CD4-positive, alpha-beta memory T cell (primary cell): ENCODE measurements at regions of chr3 and their contacts with region 1.

Region 1: GRCh38 chr3:161220850-161221753 is at the start of gene NMD3:
- DNase-seq: peak; percentile 88 to 92 (median 90)
- H3K4me3 ChIP-seq: peak within 1 kb of the TSS; percentile 83 to 84
- H3K4me3 Mint-ChIP-seq: peak within 1 kb of the TSS; percentile 92 to 96 (median 94)
- H3K27ac ChIP-seq: peak within 1 kb of the TSS; percentile 93
- H3K27ac Mint-ChIP-seq: peak within 1 kb of the TSS; percentile 89 to 98 (median 96)
- H3K4me1 ChIP-seq: peaks cover 49% of the 10 kb centered on the region
- H3K4me1 Mint-ChIP-seq: peaks cover 21 to 45% (median 30%) of the 10 kb centered on the region in 4 donors
- H3K27me3 ChIP-seq: no peaks in the 10 kb centered on the region
- H3K27me3 Mint-ChIP-seq: peaks cover 2 to 3% of the 10 kb centered on the region in 2 donors
- total RNA-seq, gene NMD3: 38.7 to 41.4 TPM

Region 2: GRCh38 chr3:160449636-160450598 is 771.2 kb before region 1 on chr3 and contains the start of gene TRIM59:
- CTCF ChIA-PET with region 1: no interaction called
- POLR2A ChIA-PET with region 1: no interaction called
- intact Hi-C with region 1: loop called (anchors 2 kb)
- DNase-seq: peak; percentile 93 to 98 (median 97)
- H3K4me3 ChIP-seq: peak within 1 kb of the TSS; percentile 82 to 91
- H3K4me3 Mint-ChIP-seq: peak within 1 kb of the TSS; percentile 93 to 100 (median 98)
- H3K27ac ChIP-seq: peak within 1 kb of the TSS; percentile 81
- H3K27ac Mint-ChIP-seq: peak within 1 kb of the TSS; percentile 92 to 99 (median 97)
- H3K4me1 ChIP-seq: peaks cover 35% of the 10 kb centered on the region
- H3K4me1 Mint-ChIP-seq: peaks cover 18 to 48% (median 33%) of the 10 kb centered on the region in 4 donors
- H3K27me3 ChIP-seq: no peaks in the 10 kb centered on the region
- H3K27me3 Mint-ChIP-seq: no peaks in the 10 kb centered on the region
- total RNA-seq, gene TRIM59: 26.3 to 28.3 TPM

Region 3: GRCh38 chr3:160565442-160566403 is 655.4 kb before region 1 on chr3 and contains the start of gene KPNA4:
- CTCF ChIA-PET with region 1: no interaction called
- POLR2A ChIA-PET with region 1: interaction called, 3 read pairs
- intact Hi-C with region 1: loop called (anchors 1 kb)
- DNase-seq: peak; percentile 96 to 97 (median 97)
- H3K4me3 ChIP-seq: peak within 1 kb of the TSS; percentile 40 to 72
- H3K4me3 Mint-ChIP-seq: peak within 1 kb of the TSS; percentile 94 to 99 (median 96)
- H3K27ac ChIP-seq: peak within 1 kb of the TSS; percentile 85
- H3K27ac Mint-ChIP-seq: peak within 1 kb of the TSS; percentile 96 to 99 (median 98)
- H3K4me1 ChIP-seq: peaks cover 48% of the 10 kb centered on the region
- H3K4me1 Mint-ChIP-seq: peaks cover 42 to 62% (median 53%) of the 10 kb centered on the region in 4 donors
- H3K27me3 ChIP-seq: no peaks in the 10 kb centered on the region
- H3K27me3 Mint-ChIP-seq: no peaks in the 10 kb centered on the region
- total RNA-seq, gene KPNA4: 46.1 to 50.1 TPM

Region 4: DNA sequence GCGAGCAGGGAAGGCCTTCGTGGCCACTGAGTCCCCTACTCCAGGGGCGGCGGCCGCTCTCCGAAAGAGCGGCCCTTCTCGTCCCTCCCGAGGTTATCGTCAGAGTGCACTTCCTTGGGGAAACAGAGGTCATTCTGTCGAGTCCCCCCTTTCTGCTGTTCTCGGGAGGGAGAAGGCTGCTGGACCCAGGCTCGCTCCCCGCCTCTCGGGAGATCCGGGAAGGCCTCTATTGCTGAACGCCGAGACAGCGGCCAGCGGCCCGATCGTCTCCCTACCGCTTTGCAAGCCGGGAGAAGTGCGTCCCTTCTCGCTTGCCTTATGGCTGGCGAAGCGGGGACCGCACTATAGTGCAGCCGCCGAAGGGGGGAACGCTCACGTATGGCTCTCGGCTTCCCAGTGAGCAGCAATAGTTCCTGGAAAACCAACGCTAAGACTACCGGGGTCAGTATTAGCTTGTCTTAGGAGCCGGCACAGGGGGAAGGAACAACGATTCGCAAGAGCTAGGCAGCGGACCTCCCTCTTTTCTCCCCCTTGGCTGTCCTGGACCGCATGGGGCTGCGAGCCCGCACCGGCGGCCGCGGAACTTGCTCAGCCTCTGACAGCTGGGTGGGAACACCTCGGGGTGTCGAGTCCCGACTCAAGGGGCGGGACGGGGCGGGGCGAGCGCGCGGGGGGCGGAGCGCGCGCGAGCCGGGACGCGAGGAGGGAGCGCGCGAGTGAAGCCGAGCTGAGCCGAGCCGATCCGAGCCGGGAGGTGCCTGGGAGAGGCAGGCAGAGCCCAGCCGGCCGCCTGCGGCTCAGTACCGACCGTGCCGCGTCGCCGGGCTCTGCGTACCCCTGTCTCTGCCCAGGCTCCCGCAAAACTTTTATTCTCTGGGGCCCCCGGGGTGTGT is 466.0 kb before region 1 on chr3:
- CTCF ChIA-PET with region 1: no interaction called
- POLR2A ChIA-PET with region 1: interaction called, 11 read pairs
- intact Hi-C with region 1: loop called (anchors 1 kb)
- DNase-seq: peak; percentile 86 to 89 (median 88)
- H3K4me3 ChIP-seq: peak overlapping the region; percentile 67 to 96
- H3K4me3 Mint-ChIP-seq: peak overlapping the region; percentile 91 to 98 (median 94)
- H3K27ac ChIP-seq: peak overlapping the region; percentile 69
- H3K27ac Mint-ChIP-seq: peak overlapping the region; percentile 94 to 98 (median 97)
- H3K4me1 ChIP-seq: peaks cover 24% of the 10 kb centered on the region
- H3K4me1 Mint-ChIP-seq: peaks cover 17 to 37% (median 27%) of the 10 kb centered on the region in 4 donors
- H3K27me3 ChIP-seq: no peaks in the 10 kb centered on the region
- H3K27me3 Mint-ChIP-seq: peaks cover 0 to 5% of the 10 kb centered on the region in 2 donors

Region 5: GRCh38 chr3:160986069-160986468 is 235.0 kb before region 1 on chr3:
- CTCF ChIA-PET with region 1: no interaction called
- POLR2A ChIA-PET with region 1: no interaction called
- intact Hi-C with region 1: no loop called
- DNase-seq: no peak
- H3K4me3 ChIP-seq: no peak overlapping the region
- H3K4me3 Mint-ChIP-seq: no peak overlapping the region
- H3K27ac ChIP-seq: no peak overlapping the region
- H3K27ac Mint-ChIP-seq: no peak overlapping the region
- H3K4me1 ChIP-seq: no peaks in the 10 kb centered on the region
- H3K4me1 Mint-ChIP-seq: no peaks in the 10 kb centered on the region
- H3K27me3 ChIP-seq: no peaks in the 10 kb centered on the region
- H3K27me3 Mint-ChIP-seq: no peaks in the 10 kb centered on the region

Region 6: DNA sequence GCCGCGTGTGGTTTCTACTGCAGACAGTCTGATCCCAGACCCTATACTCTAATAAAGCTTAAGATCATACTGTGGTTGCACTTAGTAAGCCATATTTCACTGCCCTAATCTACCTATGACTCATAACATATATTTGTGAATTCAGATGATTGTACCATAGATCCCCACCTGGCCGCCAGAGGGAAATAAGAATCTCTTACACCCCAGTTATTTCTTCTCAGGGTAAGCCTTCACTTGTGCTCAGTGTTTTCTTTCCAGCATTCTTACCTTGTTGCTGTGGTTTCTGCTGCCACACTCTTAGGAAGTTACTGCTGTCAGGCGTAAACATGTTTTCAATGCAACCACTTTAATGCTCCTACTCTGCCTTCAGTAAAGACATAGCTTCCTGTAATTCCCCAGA is 221.8 kb before region 1 on chr3:
- CTCF ChIA-PET with region 1: no interaction called
- POLR2A ChIA-PET with region 1: no interaction called
- intact Hi-C with region 1: no loop called
- DNase-seq: no peak
- H3K4me3 ChIP-seq: no peak overlapping the region
- H3K4me3 Mint-ChIP-seq: no peak overlapping the region
- H3K27ac ChIP-seq: no peak overlapping the region
- H3K27ac Mint-ChIP-seq: no peak overlapping the region
- H3K4me1 ChIP-seq: no peaks in the 10 kb centered on the region
- H3K4me1 Mint-ChIP-seq: no peaks in the 10 kb centered on the region
- H3K27me3 ChIP-seq: no peaks in the 10 kb centered on the region
- H3K27me3 Mint-ChIP-seq: no peaks in the 10 kb centered on the region

Region 7: DNA sequence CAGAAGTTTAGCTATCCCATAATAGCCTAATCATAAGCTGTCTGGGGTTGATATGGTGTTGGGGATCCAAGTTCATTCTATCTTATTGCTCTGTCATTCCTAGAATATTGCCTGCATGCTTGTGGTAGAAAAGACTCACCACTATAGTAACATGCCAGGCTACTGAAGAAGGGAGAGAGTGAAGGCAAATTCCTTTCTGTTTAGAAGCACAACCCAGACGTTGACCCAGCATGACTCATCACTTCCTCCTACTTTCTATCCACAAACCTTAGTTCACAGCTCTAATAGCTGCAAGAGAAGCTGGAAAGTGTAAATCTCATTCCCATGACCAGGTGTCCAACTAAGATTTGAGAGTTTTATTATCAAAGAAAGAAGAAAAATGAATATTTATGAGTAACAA is 57.8 kb before region 1 on chr3:
- CTCF ChIA-PET with region 1: no interaction called
- POLR2A ChIA-PET with region 1: no interaction called
- intact Hi-C with region 1: no loop called
- DNase-seq: no peak
- H3K4me3 ChIP-seq: no peak overlapping the region
- H3K4me3 Mint-ChIP-seq: no peak overlapping the region
- H3K27ac ChIP-seq: no peak overlapping the region
- H3K27ac Mint-ChIP-seq: no peak overlapping the region
- H3K4me1 ChIP-seq: no peaks in the 10 kb centered on the region
- H3K4me1 Mint-ChIP-seq: no peaks in the 10 kb centered on the region
- H3K27me3 ChIP-seq: no peaks in the 10 kb centered on the region
- H3K27me3 Mint-ChIP-seq: peaks cover 2 to 9% of the 10 kb centered on the region in 2 donors

Region 8: DNA sequence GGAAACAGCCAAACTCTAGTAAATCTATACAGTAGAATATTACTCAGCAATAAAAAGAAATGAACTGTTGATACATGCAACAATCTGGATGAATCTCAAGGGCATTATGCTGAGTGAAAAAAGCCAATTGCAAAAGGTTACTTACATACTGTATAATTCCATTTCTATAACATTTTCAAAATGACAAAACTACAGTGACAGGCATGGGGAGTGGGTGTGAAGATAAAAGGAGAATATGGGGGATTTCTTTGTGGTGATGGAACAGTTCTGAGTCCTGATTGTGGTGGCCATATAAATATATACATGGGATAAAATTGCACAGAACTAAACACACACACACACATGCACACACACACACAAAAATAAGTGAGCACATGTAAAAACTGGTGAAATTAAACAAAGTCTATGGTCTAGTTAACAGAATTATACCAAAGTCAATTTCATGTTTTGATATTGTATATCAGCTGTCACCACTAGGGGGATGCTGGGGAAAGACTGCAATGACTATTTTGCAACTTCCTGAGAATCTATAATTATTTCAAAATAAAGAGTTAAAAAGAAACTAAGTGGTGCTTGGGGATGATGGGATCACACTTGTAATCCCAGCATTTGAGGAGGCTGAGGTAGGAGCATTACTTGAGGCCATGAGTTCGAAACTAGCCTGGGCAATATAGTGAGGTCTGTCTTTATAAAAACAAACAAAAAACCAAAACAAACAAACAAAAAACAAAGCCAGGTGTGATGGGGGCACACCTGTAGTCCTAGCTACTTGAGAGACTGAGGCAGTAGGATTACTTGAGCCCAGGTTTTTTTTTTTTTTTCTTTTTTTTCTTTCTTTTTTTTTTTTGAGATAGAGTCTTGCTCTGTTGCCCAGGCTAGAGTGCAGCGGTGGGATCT is 84.2 kb after region 1 on chr3:
- CTCF ChIA-PET with region 1: no interaction called
- POLR2A ChIA-PET with region 1: no interaction called
- intact Hi-C with region 1: loop called (anchors 5 kb)
- DNase-seq: peak in 4 of 5 donors; percentile 11 to 26 (median 17)
- H3K4me3 ChIP-seq: no peak overlapping the region
- H3K4me3 Mint-ChIP-seq: peak overlapping the region in 2 of 8 donors; percentile 18 to 31
- H3K27ac ChIP-seq: no peak overlapping the region
- H3K27ac Mint-ChIP-seq: no peak overlapping the region
- H3K4me1 ChIP-seq: peaks cover 24% of the 10 kb centered on the region
- H3K4me1 Mint-ChIP-seq: peaks cover 22 to 42% (median 28%) of the 10 kb centered on the region in 4 donors
- H3K27me3 ChIP-seq: no peaks in the 10 kb centered on the region
- H3K27me3 Mint-ChIP-seq: no peaks in the 10 kb centered on the region

Region 9: GRCh38 chr3:161371430-161372326 is 150.6 kb after region 1 on chr3 and contains the start of gene SPTSSB:
- CTCF ChIA-PET with region 1: no interaction called
- POLR2A ChIA-PET with region 1: no interaction called
- intact Hi-C with region 1: loop called (anchors 5 kb)
- DNase-seq: peak; percentile 41 to 57 (median 45)
- H3K4me3 ChIP-seq: peak within 1 kb of the TSS; percentile 46 to 69
- H3K4me3 Mint-ChIP-seq: peak within 1 kb of the TSS; percentile 83 to 95 (median 88)
- H3K27ac ChIP-seq: no peak within 1 kb of the TSS
- H3K27ac Mint-ChIP-seq: peak within 1 kb of the TSS in 4 of 7 donors; percentile 4 to 91 (median 72)
- H3K4me1 ChIP-seq: peaks cover 17% of the 10 kb centered on the region
- H3K4me1 Mint-ChIP-seq: peaks cover 4 to 25% (median 12%) of the 10 kb centered on the region in 4 donors
- H3K27me3 ChIP-seq: peaks cover 5% of the 10 kb centered on the region
- H3K27me3 Mint-ChIP-seq: peaks cover 4 to 17% of the 10 kb centered on the region in 2 donors
- total RNA-seq, gene SPTSSB: not detected